ENCODE measurements at regions of chr11 and their contacts with region 1.

Region 1: GRCh38 chr11:67105964-67106363 is 13.1 kb upstream of the KDM2A start:
- DNase-seq: no peak
- ATAC-seq: no peak
- H3K4me3 ChIP-seq: no peak overlapping the region
- H3K27ac ChIP-seq: no peak overlapping the region
- H3K4me1 ChIP-seq: no peaks in the 10 kb centered on the region
- CTCF ChIP-seq: no peak
- EP300 ChIP-seq: no peak
- POLR2A ChIP-seq: no peak
- RAD21 ChIP-seq: no peak

Region 2: GRCh38 chr11:67095214-67095507 is 10.8 kb before region 1 on chr11:
- CTCF ChIA-PET with region 1: interaction called, 10 read pairs
- POLR2A ChIA-PET with region 1: no interaction called
- DNase-seq: no peak
- ATAC-seq: peak in 1 of 2 experiments; percentile 50; a peak in 3 of 6 replicates
- H3K4me3 ChIP-seq: no peak overlapping the region
- H3K27ac ChIP-seq: no peak overlapping the region
- H3K4me1 ChIP-seq: no peaks in the 10 kb centered on the region
- CTCF ChIP-seq: no peak
- EP300 ChIP-seq: no peak
- POLR2A ChIP-seq: no peak
- RAD21 ChIP-seq: no peak